Ascending aorta (tissue), 2 donors: ENCODE measurements at regions of chr12 and their contacts with region 1.

Region 1: DNA sequence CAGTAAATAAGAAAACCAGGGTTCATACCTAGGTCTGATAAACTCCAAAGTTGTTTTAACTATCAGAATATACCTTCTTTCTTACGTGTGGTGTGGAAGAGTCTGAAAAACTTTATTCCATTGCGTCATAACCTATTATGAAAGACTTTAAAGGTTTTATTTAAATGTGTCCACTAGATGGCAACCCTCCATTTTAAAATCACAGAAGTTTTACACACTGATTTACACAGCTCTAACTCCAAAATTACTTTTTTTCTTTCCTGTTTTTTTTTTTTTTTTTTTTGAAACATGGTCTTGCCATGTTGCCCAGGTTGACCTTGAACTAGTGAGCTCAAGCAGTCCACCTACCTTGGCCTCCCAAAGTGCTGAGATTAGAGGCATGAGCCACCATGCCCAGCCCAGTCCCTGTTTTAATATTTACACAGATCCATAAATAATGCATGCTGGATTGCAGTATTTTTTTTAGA is 17.3 kb upstream of the TMPRSS12 start:
- DNase-seq: no peak
- H3K4me3 ChIP-seq: no peak overlapping the region
- H3K27ac ChIP-seq: peak overlapping the region; percentile 50 to 51
- H3K4me1 ChIP-seq: no peaks in the 10 kb centered on the region
- H3K27me3 ChIP-seq: no peaks in the 10 kb centered on the region
- CTCF ChIP-seq: peak; percentile 37 to 45 (median 44)

Region 2: DNA sequence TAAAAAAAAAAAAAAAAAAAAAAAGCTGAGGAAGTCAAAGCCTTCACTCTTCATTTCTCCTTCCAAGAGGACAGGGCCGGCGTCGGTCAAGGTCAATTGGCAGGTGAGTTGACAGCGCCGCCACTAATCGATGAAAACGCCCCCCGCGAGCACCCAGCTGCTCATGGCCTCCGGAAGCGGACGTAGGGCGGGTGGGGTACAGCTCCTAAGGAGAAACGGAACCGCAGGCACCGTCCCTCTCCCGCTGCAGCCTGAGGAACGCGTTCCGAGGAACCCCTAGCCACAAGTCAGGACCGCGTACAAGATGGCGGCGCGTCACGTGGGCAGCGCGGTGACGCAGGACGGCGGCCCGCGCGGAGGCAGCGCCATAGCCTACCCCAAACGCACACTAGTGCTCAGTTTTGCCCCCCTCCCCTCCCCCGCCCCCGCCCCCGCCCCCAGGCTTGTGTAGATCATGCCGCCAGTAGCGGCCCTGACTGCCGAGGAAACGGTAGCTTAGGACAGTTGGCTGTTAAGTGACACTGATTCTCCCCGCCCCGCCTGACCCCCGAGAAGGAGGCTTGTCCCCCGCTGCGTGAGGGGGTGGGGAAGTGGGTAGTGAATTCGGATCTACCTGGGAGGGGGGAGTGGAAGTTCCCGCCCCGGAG is 61.6 kb before region 1 on chr12 and contains the start of gene ATF1:
- intact Hi-C with region 1: loop called (anchors 5 kb)
- DNase-seq: peak; percentile 73 to 96
- H3K4me3 ChIP-seq: peak within 1 kb of the TSS; percentile 83 to 94
- H3K27ac ChIP-seq: peak within 1 kb of the TSS; percentile 96 to 98
- H3K4me1 ChIP-seq: peaks cover 0 to 15% of the 10 kb centered on the region in 2 donors
- H3K27me3 ChIP-seq: no peaks in the 10 kb centered on the region
- CTCF ChIP-seq: no peak
- total RNA-seq, gene ATF1: 6.8 TPM

Region 3: GRCh38 chr12:50986966-50987737 is 161.7 kb after region 1 on chr12:
- intact Hi-C with region 1: loop called (anchors 1 kb)
- DNase-seq: peak in 1 of 2 donors; percentile 67
- H3K4me3 ChIP-seq: no peak overlapping the region
- H3K27ac ChIP-seq: peak overlapping the region in 1 of 2 donors; percentile 81
- H3K4me1 ChIP-seq: peaks cover 7 to 35% of the 10 kb centered on the region in 2 donors
- H3K27me3 ChIP-seq: no peaks in the 10 kb centered on the region
- CTCF ChIP-seq: peak; percentile 48 to 72 (median 56)

Region 4: GRCh38 chr12:51070004-51070403 is 244.6 kb after region 1 on chr12:
- intact Hi-C with region 1: no loop called
- DNase-seq: no peak
- H3K4me3 ChIP-seq: no peak overlapping the region
- H3K27ac ChIP-seq: no peak overlapping the region
- H3K4me1 ChIP-seq: no peaks in the 10 kb centered on the region
- H3K27me3 ChIP-seq: no peaks in the 10 kb centered on the region
- CTCF ChIP-seq: no peak